ENCODE measurements at regions of chr16 and their contacts with region 1.

Region 1: DNA sequence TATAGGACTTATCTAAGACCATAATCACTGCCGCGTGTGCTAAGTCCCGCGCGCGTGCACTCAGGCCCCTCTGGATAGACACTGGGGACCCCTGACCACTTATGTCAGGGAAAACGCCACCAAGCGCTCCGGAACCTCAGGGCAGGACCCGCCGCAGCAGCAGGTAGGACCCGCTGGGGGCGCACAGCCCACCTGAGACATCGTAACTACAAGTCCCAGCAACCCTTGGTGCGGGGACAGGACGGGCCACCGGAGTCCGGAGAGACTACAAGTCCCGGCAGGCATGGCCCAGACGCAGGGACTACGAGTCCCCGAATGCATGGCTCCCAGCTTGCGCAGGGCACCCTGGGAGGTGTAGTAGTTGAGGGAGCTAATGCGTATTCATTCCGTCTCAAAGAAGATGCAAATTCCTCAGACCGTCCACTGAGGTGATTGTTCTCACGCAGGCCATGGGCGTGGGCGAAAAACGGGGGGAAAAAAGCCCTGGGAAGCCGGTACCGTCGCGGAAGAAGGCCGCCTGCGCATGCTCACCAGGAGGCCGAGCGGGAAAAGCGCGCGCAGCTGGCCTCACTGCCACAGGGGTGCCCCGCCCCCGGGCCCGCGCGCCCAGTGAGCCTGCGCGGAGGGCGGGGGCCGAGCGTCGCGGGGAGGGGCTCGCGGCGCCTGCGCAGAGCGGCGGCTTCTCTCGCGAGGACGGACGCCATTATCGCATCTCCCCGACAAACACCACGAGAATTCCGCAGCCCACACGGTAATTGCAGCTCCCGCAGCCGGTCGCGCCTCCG is at the start of gene BANP:
- DNase-seq: peak; percentile 93 to 99 (median 99)
- H3K4me3 ChIP-seq: peak within 1 kb of the TSS; percentile 78 to 100 (median 92)
- H3K27ac ChIP-seq: peak within 1 kb of the TSS; percentile 89 to 100 (median 99)
- H3K27me3 ChIP-seq: no peaks in the 10 kb centered on the region
- CTCF ChIP-seq: peak in 44 of 56 donors; percentile 8 to 56 (median 33)
- total RNA-seq, gene BANP: 17.6 to 85.0 (median 34.7) TPM

Region 2: GRCh38 chr16:87834623-87835407 is 116.1 kb before region 1 on chr16:
- intact Hi-C with region 1: no loop called
- DNase-seq: peak in 1 of 10 donors; percentile 68
- H3K4me3 ChIP-seq: no peak overlapping the region
- H3K27ac ChIP-seq: peak overlapping the region in 24 of 59 donors; percentile 4 to 81 (median 50)
- H3K27me3 ChIP-seq: no peaks in the 10 kb centered on the region
- CTCF ChIP-seq: no peak

Region 3: DNA sequence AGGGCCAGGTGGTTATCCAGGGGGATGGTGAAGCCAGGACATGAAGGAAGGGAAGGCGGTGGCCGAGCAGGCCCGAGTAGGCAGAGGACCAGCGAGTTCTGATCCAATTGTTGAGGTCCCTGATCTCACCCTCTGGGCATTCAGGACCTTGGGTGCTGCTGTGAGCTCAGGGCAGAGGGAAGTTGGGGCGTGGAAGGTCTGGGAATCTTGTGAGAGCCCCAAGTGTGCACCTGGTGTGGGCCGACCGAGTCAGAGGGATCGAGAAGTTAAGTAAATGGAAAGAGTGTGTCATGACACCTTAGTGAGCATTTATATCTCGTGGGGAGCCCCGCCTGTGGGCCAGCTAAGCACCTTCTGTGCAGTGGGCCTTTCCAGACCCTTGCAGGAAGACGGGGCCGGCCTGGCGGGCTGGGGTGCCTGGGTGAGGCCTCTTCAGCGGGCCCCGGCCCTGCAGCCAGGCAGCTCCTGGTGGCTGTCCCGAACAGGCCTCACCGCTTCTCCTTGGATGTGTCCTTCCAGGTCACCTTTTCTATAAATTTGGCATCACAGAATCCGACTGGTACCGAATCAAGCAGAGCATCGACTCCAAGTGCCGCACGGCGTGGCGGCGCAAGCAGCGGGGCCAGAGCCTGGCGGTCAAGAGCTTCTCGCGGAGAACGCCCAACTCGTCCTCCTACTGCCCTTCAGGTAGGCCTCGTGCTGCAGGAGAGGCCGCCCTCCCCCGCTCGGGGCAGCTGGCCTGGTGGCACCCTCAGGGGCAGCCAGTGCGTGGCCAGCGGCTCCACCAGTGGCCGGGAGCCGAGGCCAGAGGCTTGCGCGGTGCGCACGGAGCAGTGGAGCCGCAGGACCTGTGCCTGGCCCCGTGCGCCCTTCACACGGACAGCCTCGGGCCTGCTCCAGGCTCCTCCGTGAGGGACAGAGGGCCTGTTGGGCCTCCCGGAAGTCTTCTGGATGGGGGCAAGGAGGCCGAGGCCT is 76.3 kb after region 1 on chr16:
- intact Hi-C with region 1: no loop called
- DNase-seq: peak in 3 of 10 donors; percentile 14 to 40 (median 21)
- H3K4me3 ChIP-seq: no peak overlapping the region
- H3K27ac ChIP-seq: no peak overlapping the region
- H3K27me3 ChIP-seq: no peaks in the 10 kb centered on the region
- CTCF ChIP-seq: no peak

Region 4: GRCh38 chr16:88383401-88384221 is 432.7 kb after region 1 on chr16:
- intact Hi-C with region 1: loop called in 1 of 2 experiments (anchors 10 kb)
- DNase-seq: peak in 4 of 10 donors; percentile 37 to 61 (median 50)
- H3K4me3 ChIP-seq: peak overlapping the region in 58 of 59 donors; percentile 15 to 67 (median 48)
- H3K27ac ChIP-seq: peak overlapping the region in 6 of 59 donors; percentile 33 to 67 (median 42)
- H3K27me3 ChIP-seq: peaks cover 0 to 40% (median 8%) of the 10 kb centered on the region in 45 donors
- CTCF ChIP-seq: peak in 47 of 56 donors; percentile 11 to 63 (median 38)

Region 5: GRCh38 chr16:88527186-88527936 is 576.4 kb after region 1 on chr16:
- intact Hi-C with region 1: loop called (anchors 2 to 10 kb)
- DNase-seq: peak in 6 of 10 donors; percentile 49 to 79 (median 60)
- H3K4me3 ChIP-seq: no peak overlapping the region
- H3K27ac ChIP-seq: peak overlapping the region in 11 of 59 donors; percentile 0 to 46 (median 16)
- H3K27me3 ChIP-seq: no peaks in the 10 kb centered on the region
- CTCF ChIP-seq: peak; percentile 54 to 94 (median 86)

Region 6: DNA sequence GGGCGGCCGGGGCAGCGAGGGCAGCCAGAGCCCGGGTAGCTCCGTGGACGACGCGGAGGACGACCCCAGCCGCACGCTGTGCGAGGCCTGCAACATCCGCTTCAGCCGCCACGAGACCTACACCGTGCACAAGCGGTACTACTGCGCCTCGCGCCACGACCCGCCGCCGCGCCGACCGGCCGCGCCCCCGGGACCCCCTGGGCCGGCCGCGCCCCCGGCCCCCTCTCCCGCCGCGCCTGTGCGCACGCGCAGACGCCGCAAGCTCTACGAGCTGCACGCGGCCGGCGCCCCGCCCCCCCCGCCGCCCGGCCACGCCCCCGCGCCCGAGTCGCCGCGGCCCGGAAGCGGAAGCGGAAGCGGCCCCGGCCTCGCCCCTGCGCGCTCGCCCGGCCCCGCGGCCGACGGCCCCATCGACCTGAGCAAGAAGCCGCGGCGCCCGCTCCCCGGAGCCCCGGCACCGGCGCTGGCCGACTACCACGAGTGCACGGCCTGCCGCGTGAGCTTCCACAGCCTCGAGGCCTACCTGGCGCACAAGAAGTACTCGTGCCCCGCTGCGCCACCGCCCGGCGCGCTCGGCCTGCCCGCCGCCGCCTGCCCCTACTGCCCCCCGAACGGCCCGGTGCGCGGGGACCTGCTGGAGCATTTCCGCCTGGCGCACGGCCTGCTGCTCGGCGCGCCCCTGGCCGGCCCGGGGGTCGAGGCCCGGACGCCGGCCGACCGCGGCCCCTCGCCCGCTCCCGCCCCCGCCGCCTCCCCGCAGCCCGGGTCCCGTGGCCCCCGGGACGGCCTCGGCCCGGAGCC is 583.2 kb after region 1 on chr16:
- intact Hi-C with region 1: loop called in 1 of 2 experiments (anchors 10 kb)
- DNase-seq: peak in 8 of 10 donors; percentile 52 to 84 (median 64)
- H3K4me3 ChIP-seq: peak overlapping the region in 58 of 59 donors; percentile 46 to 91 (median 71)
- H3K27ac ChIP-seq: peak overlapping the region in 50 of 59 donors; percentile 38 to 91 (median 82)
- H3K27me3 ChIP-seq: peaks cover 0 to 4% (median 0%) of the 10 kb centered on the region in 45 donors
- CTCF ChIP-seq: peak in 4 of 56 donors; percentile 5 to 24 (median 14)